ENCODE measurements at regions of chr11 and their contacts with region 1.

Region 1: DNA sequence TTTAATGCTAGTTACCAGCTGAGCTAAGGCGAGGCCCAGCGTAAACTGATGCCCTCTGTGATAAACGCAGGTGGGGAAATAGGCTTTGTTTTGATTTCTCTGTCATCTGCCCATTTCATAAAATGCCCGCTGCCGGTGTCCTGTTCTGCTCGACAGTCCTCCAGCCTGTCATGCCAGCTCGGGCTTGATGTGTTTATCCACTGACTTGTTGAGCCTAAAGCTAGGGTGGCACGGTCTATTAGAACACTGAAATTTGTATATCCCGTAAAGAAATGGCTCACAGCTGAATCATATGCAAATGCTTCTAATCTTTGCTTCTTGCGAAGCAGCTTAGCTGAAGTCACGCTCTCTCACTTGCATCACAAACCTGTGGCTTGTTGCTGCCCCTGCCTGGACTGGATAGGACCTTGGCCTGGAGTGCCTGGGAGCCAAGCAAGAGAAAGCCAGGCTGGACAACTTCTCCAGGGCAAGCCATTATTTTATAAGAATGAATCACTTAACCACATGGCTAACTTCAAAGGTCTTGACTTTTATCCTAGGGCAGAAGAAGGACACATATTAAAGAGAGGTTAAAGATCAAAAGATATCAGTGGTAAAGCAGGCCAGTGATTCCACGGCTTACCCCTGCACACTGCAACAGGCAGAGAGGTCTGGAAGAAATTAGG is 33.1 kb downstream of the EHF start:
- DNase-seq: no peak
- H3K4me3 Mint-ChIP-seq: no peak overlapping the region
- H3K27ac Mint-ChIP-seq: peak overlapping the region; percentile 56
- H3K4me1 Mint-ChIP-seq: peaks cover 31% of the 10 kb centered on the region
- H3K27me3 Mint-ChIP-seq: peaks cover 53% of the 10 kb centered on the region

Region 2: DNA sequence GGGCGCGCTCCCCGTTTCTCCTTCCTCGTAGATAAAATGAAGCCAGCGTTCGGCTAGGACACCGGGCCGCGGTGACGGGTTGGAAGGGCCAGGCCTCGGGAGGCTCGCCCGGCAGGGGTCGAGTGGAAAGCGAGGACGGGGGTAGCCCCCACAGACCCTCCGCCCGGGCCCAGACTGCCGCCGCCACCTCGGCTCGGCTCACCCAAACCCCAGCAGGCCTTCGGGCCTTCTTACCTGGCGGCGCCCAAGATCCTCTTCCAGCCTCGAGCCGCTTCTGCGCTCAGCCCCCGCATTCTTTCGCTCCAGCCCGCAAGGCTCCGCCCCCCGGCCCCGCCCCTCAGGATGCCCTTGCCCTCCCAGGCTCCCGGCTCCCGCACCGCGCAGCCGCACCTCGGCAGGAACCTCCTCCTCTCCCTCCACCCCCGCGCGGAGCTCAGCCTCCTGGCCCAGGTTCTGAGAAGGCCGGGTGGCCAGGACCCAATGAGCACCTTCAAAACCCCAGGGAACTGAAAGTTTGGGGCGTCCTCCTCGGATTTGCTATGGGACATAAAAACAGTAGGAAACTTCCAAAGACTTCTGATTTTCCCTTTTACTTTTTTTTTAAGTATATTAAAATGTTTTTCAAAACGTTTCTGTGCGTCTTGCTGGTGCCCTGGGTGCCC is 917.7 kb before region 1 on chr11 and contains the start of gene CD59:
- intact Hi-C with region 1: loop called (anchors 10 kb)
- DNase-seq: peak; percentile 79
- H3K4me3 Mint-ChIP-seq: peak within 1 kb of the TSS; percentile 87
- H3K27ac Mint-ChIP-seq: peak within 1 kb of the TSS; percentile 86
- H3K4me1 Mint-ChIP-seq: peaks cover 35% of the 10 kb centered on the region
- H3K27me3 Mint-ChIP-seq: peaks cover 12% of the 10 kb centered on the region
- total RNA-seq, gene CD59: 165 and 173 TPM in 2 replicates

Region 3: DNA sequence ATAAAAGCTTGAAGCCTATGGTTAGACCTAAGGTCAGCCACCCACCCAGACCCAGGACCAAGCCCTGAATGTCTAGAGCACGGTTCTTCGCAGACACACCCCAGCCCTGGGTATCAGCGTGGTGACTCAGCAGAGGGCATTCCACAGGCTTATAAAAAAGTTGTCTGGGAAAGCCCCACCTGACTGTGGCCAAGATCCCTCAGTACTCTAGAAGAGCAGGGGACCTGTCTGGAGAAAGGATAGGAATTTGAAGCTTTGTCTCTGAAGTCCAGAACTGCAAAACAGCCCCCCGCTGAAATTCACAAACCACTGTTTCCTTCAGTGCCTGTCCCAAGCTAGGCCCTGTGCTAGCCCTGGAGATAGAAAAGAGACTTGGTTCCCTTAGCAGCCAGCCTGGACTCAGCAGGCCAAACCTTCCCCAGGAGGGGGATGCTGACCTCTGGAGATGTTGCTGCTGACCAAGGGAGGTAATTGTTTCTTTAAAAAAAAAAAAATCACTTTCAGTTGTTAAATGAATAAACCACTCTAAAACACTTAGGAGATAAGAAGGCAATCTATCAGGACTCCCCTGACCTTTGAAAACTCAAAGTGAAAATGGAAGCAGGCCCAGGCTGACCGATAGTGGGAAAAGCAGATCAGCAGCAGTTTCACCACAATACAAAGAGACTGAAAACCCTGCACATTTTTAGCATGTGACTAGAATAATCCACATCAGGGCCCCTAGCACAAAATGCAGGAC is 410.1 kb before region 1 on chr11:
- intact Hi-C with region 1: loop called (anchors 2 kb)
- DNase-seq: peak; percentile 52
- H3K4me3 Mint-ChIP-seq: peak overlapping the region; percentile 45
- H3K27ac Mint-ChIP-seq: peak overlapping the region; percentile 83
- H3K4me1 Mint-ChIP-seq: peaks cover 87% of the 10 kb centered on the region
- H3K27me3 Mint-ChIP-seq: no peaks in the 10 kb centered on the region

Region 4: DNA sequence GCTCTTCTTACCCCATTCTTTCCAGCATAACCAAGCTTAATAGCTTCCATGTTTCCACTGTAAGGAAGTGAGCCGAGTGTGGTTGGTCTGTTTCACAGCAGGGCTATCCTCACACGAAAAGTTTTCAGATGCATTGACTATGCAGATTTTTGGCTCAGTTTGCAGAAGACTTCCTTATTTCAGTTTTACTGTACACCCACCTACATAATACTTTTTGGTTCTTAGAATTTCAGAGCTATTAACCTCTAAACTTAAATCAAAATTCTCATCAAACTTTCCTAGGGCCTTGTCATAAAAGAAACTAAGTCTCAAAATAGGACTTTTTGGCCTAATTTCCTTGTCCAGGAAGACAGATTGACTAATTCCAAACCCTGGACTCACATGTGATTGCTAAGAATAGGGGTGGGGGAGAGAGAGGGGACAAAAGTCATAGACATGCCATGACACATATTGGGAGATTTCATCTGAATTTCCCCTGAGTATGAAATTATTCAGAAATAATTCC is 40.4 kb before region 1 on chr11:
- intact Hi-C with region 1: loop called (anchors 1 kb)
- DNase-seq: no peak
- H3K4me3 Mint-ChIP-seq: no peak overlapping the region
- H3K27ac Mint-ChIP-seq: no peak overlapping the region
- H3K4me1 Mint-ChIP-seq: peaks cover 14% of the 10 kb centered on the region
- H3K27me3 Mint-ChIP-seq: peaks cover 41% of the 10 kb centered on the region

Region 5: GRCh38 chr11:34685864-34686263 is 31.9 kb after region 1 on chr11:
- intact Hi-C with region 1: loop called (anchors 2 kb)
- DNase-seq: no peak
- H3K4me3 Mint-ChIP-seq: no peak overlapping the region
- H3K27ac Mint-ChIP-seq: no peak overlapping the region
- H3K4me1 Mint-ChIP-seq: no peaks in the 10 kb centered on the region
- H3K27me3 Mint-ChIP-seq: peaks cover 4% of the 10 kb centered on the region

Region 6: DNA sequence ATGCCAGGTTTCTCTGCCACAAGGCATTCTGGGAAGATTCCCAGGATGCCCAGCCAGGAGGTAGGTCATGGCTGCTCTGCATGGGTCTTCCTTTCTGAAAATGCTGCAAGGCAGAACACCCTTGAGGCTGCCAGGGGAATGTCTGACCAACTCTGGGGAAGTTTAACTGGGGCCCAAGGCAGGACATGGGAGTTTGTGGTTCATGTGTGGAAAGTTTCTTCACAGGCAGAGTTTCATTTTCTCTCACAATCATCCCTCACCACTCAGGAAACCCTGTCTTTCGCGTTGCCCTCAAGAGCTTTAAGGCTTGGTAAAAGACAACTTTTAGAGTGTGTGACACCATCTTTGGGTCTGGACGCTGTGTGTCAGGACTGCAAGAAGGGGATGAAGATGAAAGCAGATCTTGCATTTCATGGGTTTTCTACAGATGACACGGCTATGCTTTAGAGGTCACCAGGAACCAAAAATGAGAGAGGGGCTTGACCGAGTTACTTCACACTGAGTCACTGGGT is 618.5 kb after region 1 on chr11:
- intact Hi-C with region 1: loop called (anchors 10 kb)
- DNase-seq: peak; percentile 36
- H3K4me3 Mint-ChIP-seq: peak overlapping the region; percentile 23
- H3K27ac Mint-ChIP-seq: peak overlapping the region; percentile 79
- H3K4me1 Mint-ChIP-seq: peaks cover 57% of the 10 kb centered on the region
- H3K27me3 Mint-ChIP-seq: peaks cover 18% of the 10 kb centered on the region